Endothelial cell of umbilical vein (primary cell): ENCODE measurements at regions of chr6 and their contacts with region 1.

Region 1: GRCh38 chr6:3977875-3978711 is 100.8 kb downstream of the FAM217A start:
- DNase-seq: peak; percentile 90
- H3K4me3 ChIP-seq: no peak overlapping the region
- H3K27ac ChIP-seq: no peak overlapping the region
- H3K4me1 ChIP-seq: peaks cover 6% of the 10 kb centered on the region
- H3K27me3 ChIP-seq: no peaks in the 10 kb centered on the region
- CTCF ChIP-seq: peak; percentile 66 to 93
- POLR2A ChIP-seq: no peak

Region 2: GRCh38 chr6:3410385-3411360 is 567.4 kb before region 1 on chr6:
- CTCF ChIA-PET with region 1: interaction called, 4 read pairs
- POLR2A ChIA-PET with region 1: no interaction called
- dilution Hi-C with region 1: no loop called
- intact Hi-C with region 1: loop called (anchors 1 kb)
- DNase-seq: peak; percentile 59
- H3K4me3 ChIP-seq: no peak overlapping the region
- H3K27ac ChIP-seq: no peak overlapping the region
- H3K4me1 ChIP-seq: no peaks in the 10 kb centered on the region
- H3K27me3 ChIP-seq: no peaks in the 10 kb centered on the region
- CTCF ChIP-seq: peak; percentile 85 to 87
- POLR2A ChIP-seq: no peak

Region 3: DNA sequence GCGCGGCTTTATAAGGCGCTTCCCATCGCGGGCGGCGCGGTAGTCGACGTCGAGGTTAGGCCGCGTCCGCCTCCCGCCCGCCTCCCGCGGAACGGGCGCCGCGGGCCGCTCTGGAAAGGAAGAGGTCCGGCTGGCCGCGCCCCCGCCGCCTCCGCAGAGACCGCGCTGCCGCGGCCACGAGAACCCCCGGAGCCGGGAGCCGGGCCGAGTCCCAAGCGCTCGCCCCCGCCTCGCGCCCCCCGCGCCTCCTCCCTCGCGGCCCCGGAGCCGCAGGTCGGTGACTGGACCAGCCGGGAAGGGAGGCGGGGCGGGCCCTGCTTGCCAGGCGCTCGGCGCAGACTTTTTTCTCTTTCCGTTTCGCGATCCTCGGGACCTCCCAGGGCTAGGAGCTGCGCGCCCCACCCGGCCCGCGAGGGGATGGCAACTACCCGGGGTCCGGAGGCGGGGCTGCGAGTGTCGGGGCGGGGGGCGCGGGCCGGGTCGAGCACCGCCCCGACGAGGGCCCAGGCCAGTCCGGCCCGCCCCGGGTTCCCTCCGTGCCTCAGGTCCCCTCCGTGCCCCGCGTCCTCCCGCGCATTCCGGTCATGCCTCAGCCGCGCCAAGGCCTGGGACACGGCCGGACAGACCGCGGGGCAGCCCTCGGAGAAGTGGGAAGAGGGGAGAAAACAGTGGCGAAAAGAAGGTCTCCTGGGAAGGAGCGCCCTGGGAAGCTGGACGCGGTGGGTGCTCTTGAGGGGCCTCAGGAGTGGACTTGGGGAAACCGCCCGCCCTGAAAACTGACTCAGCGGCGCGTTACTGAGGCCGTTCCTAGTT is 226.2 kb before region 1 on chr6:
- CTCF ChIA-PET with region 1: interaction called, 47 read pairs
- POLR2A ChIA-PET with region 1: no interaction called
- dilution Hi-C with region 1: no loop called
- intact Hi-C with region 1: loop called (anchors 1 kb)
- DNase-seq: peak; percentile 95
- H3K4me3 ChIP-seq: peak overlapping the region; percentile 85 to 96 (median 89)
- H3K27ac ChIP-seq: peak overlapping the region; percentile 99
- H3K4me1 ChIP-seq: peaks cover 42% of the 10 kb centered on the region
- H3K27me3 ChIP-seq: no peaks in the 10 kb centered on the region
- CTCF ChIP-seq: peak; percentile 24 to 60
- POLR2A ChIP-seq: no peak

Region 4: DNA sequence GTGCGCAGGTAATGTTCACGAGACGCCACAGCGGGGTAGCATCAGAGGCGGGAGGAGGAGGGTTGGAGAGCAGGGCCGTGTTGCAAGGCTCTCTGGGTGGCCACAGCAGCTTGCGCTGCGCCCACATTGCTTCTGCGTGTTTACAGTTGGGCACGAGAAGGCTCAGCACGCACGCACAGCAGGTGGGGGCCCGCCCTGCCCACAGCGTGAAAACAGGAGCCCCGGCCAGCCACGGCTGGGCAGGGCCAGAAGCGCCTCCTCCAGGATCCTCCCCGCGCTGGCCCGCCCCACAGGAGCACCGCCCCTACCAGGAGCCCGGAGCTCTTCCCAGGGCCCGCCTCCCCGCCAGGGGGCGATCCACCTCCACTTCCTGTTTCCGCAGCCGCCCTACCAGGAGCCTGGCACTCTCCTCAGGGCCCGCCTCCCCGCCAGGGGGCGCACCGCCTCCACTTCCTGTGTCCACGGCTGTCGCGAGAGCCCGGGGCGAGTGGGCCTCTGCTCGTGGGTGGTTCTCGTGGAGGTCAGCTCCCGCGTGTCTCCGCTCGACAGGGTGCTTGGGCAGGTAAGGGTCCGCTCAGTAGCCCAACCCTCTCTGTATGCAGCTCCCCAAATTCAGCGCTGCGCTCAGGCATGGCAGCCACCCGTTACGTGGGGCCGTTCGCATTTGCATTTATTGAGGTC is 129.0 kb before region 1 on chr6 and contains the start of gene FAM50B:
- CTCF ChIA-PET with region 1: interaction called, 162 read pairs
- POLR2A ChIA-PET with region 1: no interaction called
- dilution Hi-C with region 1: no loop called
- intact Hi-C with region 1: loop called (anchors 1 kb)
- DNase-seq: peak; percentile 86
- H3K4me3 ChIP-seq: peak within 1 kb of the TSS; percentile 3 to 31 (median 12)
- H3K27ac ChIP-seq: peak within 1 kb of the TSS; percentile 21
- H3K4me1 ChIP-seq: peaks cover 4% of the 10 kb centered on the region
- H3K27me3 ChIP-seq: no peaks in the 10 kb centered on the region
- CTCF ChIP-seq: peak; percentile 87 to 92
- POLR2A ChIP-seq: peak; percentile 41
- total RNA-seq, gene FAM50B: 10.0 and 10.4 TPM in 2 replicates

Region 5: DNA sequence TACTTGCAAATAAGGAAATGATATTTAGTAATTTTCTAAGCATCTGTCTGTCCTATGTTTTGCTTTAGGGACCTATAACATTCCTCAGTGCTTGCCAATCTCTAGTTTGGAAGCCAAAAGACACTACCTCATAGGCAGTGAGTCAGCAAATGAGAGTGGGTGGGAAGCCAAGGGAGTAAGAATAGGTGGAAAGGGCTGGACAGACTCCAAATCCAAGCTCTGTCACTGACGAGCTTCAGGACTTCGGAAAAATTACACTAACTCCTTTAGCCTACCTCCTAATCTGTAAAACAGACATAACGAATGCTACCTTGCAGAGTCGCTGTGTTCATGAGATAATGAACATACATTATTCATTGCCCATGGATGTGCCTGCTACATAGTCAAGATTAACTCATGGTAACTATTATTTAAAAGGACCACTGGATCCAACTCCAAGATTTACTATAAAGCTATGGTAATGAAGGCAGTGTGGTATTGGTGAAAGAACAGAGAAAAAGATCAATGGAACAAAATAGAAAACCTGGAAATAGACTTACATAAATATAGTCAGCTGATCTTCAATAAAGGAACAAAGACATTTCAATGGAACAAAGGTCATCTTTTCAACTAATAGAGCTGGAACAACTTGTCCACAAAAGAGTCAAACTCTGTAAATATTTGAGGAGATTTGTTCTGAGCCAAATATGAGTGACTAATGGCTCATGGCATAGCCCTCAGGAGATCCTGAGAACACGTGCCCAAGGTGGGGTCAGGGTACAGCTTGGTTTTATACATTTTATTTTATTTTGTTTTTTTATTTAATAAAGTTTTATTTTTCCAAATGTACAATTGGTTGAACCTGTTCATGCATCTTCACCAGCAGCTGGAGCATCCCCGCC is 64.8 kb before region 1 on chr6:
- CTCF ChIA-PET with region 1: interaction called, 81 read pairs
- POLR2A ChIA-PET with region 1: interaction called, 6 read pairs
- dilution Hi-C with region 1: no loop called
- intact Hi-C with region 1: loop called (anchors 1 kb)
- DNase-seq: peak; percentile 99
- H3K4me3 ChIP-seq: peak overlapping the region in 1 of 3 experiments; percentile 10
- H3K27ac ChIP-seq: peak overlapping the region; percentile 98
- H3K4me1 ChIP-seq: peaks cover 72% of the 10 kb centered on the region
- H3K27me3 ChIP-seq: no peaks in the 10 kb centered on the region
- CTCF ChIP-seq: no peak
- POLR2A ChIP-seq: peak; percentile 52

Region 6: GRCh38 chr6:3962957-3963303 is 15.2 kb before region 1 on chr6:
- CTCF ChIA-PET with region 1: interaction called, 19 read pairs
- POLR2A ChIA-PET with region 1: no interaction called
- dilution Hi-C with region 1: no loop called
- intact Hi-C with region 1: loop called (anchors 1 kb)
- DNase-seq: peak; percentile 35
- H3K4me3 ChIP-seq: no peak overlapping the region
- H3K27ac ChIP-seq: no peak overlapping the region
- H3K4me1 ChIP-seq: peaks cover 18% of the 10 kb centered on the region
- H3K27me3 ChIP-seq: no peaks in the 10 kb centered on the region
- CTCF ChIP-seq: no peak
- POLR2A ChIP-seq: no peak

Region 7: GRCh38 chr6:4102687-4103244 is 124.7 kb after region 1 on chr6:
- CTCF ChIA-PET with region 1: no interaction called
- POLR2A ChIA-PET with region 1: no interaction called
- dilution Hi-C with region 1: no loop called
- intact Hi-C with region 1: no loop called
- DNase-seq: no peak
- H3K4me3 ChIP-seq: no peak overlapping the region
- H3K27ac ChIP-seq: no peak overlapping the region
- H3K4me1 ChIP-seq: no peaks in the 10 kb centered on the region
- H3K27me3 ChIP-seq: no peaks in the 10 kb centered on the region
- CTCF ChIP-seq: no peak
- POLR2A ChIP-seq: no peak

Region 8: DNA sequence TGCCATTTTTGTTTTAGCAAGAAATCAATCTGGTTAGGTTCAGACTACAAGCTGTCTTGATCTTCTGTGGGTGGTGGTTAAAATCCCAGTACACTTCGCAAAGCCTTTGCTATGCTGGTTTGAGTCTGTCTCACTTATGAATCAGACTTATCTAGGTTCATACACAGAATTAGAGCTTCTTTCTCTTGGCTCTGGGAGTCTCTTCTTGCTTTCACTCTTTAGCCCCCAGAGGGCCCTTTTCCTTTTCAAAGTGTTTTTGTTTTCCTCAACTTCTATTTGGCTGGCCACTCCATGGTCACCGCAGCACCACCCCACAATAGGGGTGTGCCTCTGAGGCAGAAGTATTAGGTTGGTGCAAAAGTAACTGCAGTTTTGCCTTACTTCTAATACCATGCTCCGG is 136.0 kb after region 1 on chr6:
- CTCF ChIA-PET with region 1: no interaction called
- POLR2A ChIA-PET with region 1: no interaction called
- dilution Hi-C with region 1: no loop called
- intact Hi-C with region 1: no loop called
- DNase-seq: no peak
- H3K4me3 ChIP-seq: no peak overlapping the region
- H3K27ac ChIP-seq: no peak overlapping the region
- H3K4me1 ChIP-seq: peaks cover 8% of the 10 kb centered on the region
- H3K27me3 ChIP-seq: no peaks in the 10 kb centered on the region
- CTCF ChIP-seq: no peak
- POLR2A ChIP-seq: no peak

Region 9: DNA sequence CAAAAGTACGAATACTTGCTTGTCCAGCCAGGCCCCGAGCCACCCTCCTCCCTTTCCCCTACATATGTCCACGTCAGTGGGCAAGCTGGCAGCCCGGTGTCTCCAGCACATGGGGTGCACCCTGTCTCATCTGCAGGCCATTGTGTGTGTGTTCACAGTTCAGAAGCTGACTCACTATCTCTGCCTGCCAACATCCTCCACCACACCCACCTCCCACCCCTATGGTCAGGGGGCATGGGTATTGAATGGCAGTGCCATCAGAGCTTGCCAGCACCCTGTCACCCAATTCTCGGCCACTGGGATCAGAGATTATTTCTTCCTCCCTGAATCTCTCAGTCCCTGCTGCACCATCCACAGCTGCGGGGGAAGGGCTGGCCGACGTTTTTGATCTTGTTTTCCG is 1478.9 kb after region 1 on chr6:
- CTCF ChIA-PET with region 1: no interaction called
- POLR2A ChIA-PET with region 1: no interaction called
- dilution Hi-C with region 1: no loop called
- intact Hi-C with region 1: no loop called
- DNase-seq: peak; percentile 29
- H3K4me3 ChIP-seq: no peak overlapping the region
- H3K27ac ChIP-seq: no peak overlapping the region
- H3K4me1 ChIP-seq: no peaks in the 10 kb centered on the region
- H3K27me3 ChIP-seq: no peaks in the 10 kb centered on the region
- CTCF ChIP-seq: no peak
- POLR2A ChIP-seq: no peak